ENCODE measurements at regions of chr6 and their contacts with region 1.

Region 1: GRCh38 chr6:138987640-138988468 is at the start of gene REPS1:
- DNase-seq: peak; percentile 90
- H3K4me3 Mint-ChIP-seq: no peak within 1 kb of the TSS
- H3K27ac Mint-ChIP-seq: peak within 1 kb of the TSS; percentile 97
- H3K4me1 Mint-ChIP-seq: no peaks in the 10 kb centered on the region
- H3K27me3 Mint-ChIP-seq: no peaks in the 10 kb centered on the region
- CTCF ChIP-seq: peak; percentile 96
- total RNA-seq, gene REPS1: 54.8 and 65.3 TPM in 2 replicates

Region 2: DNA sequence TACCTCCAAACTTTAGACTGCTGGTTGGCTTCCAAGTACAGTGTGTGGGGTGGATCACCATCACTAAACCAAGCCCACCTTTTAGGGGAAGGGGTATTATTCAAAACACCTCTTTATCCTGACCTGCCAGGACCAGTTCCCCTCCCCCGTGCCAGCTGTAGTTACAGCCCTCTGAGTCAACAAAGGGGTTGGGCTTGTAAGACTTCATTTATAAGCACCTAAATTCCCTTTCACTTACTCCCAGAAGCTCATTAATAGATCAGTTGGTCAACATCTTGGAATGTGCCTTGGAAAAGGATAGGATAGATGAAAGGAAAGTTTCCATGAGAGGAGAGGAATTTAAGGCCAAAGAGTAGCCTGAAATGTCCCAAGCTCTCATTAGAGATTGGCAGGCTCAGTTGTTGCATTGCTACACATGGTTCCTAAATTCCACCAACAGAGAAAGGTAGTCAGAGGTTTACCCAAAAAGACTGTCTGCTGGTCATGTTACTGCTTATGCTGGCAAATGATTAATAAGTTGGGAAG is 1061.6 kb before region 1 on chr6:
- CTCF ChIA-PET with region 1: no interaction called
- POLR2A ChIA-PET with region 1: no interaction called
- intact Hi-C with region 1: no loop called
- DNase-seq: peak; percentile 58
- H3K4me3 Mint-ChIP-seq: no peak overlapping the region
- H3K27ac Mint-ChIP-seq: peak overlapping the region; percentile 23
- H3K4me1 Mint-ChIP-seq: peaks cover 12% of the 10 kb centered on the region
- H3K27me3 Mint-ChIP-seq: no peaks in the 10 kb centered on the region
- CTCF ChIP-seq: no peak

Region 3: DNA sequence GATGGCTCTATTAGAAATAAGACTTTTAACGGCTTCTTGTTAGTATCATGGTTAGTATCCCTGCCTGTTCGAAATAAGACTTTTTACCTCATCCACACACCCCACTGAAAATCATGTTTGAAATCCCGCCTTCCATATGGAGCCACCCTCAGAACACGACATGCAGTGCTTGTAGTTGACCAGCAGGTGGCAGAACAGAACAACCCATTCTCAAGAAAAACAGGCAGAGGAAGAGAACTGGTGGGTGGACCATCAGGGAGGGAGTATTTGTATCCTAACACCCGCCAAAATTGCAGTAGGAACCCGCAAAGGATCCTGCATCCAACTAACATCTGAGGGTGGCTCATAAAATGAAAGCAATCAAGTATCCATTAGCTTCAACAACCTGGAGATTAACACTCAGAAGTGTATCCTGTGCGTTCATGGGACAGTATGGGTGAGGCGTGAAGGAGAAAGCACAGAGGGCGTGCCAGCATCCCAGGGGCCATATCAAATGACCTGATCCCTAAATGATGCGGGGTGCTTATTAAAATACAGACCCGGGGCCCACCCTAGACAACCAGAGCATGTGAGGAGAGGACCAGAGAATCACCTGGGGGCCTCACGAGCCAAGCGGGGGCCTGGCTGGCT is 398.9 kb before region 1 on chr6:
- CTCF ChIA-PET with region 1: no interaction called
- POLR2A ChIA-PET with region 1: no interaction called
- intact Hi-C with region 1: loop called (anchors 10 kb)
- DNase-seq: peak; percentile 84
- H3K4me3 Mint-ChIP-seq: no peak overlapping the region
- H3K27ac Mint-ChIP-seq: no peak overlapping the region
- H3K4me1 Mint-ChIP-seq: peaks cover 31% of the 10 kb centered on the region
- H3K27me3 Mint-ChIP-seq: no peaks in the 10 kb centered on the region
- CTCF ChIP-seq: peak; percentile 82

Region 4: DNA sequence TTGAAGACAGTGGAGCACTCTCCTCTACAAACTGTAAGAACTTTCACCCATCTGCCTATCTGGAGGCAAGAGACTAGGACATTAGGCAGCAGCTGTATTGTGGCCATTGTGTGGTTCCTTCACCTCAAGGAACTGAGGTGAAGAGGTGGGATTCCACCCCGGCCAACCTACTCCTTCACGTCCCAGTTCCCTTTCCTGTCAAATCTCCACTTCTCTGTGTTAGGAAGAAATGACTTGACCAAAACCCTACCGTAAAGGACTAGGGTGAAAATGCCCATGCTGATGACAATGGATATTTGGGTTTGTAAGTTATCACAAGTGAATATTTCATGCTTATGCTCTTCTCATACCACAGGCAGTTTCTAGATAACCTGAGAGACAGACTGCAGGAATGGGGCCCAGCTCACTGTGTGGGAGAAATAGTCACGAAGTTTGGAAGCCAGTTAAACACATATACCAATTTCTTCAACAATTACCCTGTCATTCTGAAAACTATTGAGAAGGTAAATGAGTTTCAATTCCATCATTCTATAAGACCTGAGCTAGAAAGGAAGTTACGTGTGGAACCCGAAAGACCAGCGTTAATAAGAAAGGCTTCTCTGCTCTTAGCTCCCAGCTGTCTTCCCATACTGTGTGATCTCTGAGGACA is 105.4 kb before region 1 on chr6:
- CTCF ChIA-PET with region 1: interaction called, 14 read pairs
- POLR2A ChIA-PET with region 1: interaction called, 23 read pairs
- intact Hi-C with region 1: no loop called
- DNase-seq: no peak
- H3K4me3 Mint-ChIP-seq: no peak overlapping the region
- H3K27ac Mint-ChIP-seq: no peak overlapping the region
- H3K4me1 Mint-ChIP-seq: no peaks in the 10 kb centered on the region
- H3K27me3 Mint-ChIP-seq: no peaks in the 10 kb centered on the region
- CTCF ChIP-seq: no peak

Region 5: GRCh38 chr6:138914701-138915100 is 73.2 kb before region 1 on chr6:
- CTCF ChIA-PET with region 1: no interaction called
- POLR2A ChIA-PET with region 1: interaction called, 4 read pairs
- intact Hi-C with region 1: loop called (anchors 2 kb)
- DNase-seq: no peak
- H3K4me3 Mint-ChIP-seq: no peak overlapping the region
- H3K27ac Mint-ChIP-seq: peak overlapping the region; percentile 13
- H3K4me1 Mint-ChIP-seq: peaks cover 12% of the 10 kb centered on the region
- H3K27me3 Mint-ChIP-seq: no peaks in the 10 kb centered on the region
- CTCF ChIP-seq: no peak

Region 6: DNA sequence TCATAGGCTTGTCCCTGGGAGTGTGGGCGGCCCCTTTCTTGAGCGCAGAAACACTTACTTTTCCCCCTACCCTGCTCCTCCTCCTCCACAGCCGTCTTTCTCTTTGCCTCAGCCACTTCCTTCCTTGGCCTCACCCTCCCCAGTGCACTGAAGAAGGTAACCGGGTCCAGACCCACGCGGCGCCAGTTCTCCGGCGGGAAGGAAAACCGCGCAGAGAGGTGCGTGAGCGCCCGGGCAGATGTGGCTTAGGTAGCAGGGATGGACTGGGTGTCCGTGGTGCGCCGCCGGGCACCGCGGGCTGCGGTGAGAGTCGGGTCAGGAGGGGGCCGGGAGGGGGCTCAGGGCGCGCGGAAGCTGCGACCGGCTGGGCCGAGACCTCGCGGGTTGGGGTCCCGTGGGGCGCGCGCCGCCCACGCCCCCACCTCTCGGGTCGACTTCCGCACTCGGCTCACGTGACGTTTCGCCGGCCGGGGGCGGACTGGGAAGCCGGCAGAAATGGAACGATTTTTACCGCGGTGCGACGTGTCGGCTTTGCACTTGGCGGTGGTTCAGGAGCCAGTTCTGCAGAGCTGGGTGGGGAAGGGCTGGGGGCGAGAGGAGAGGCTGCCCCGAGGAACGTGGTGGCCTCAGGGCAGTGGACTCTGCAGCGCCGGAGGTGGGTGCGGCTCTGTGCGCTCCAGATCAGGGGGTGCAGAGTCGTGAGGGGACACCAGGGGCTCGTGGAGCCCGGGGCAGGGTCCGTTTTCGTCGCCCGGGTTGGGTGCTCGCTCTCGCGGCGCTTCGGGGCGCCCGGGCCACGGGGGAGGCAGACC is 41.0 kb after region 1 on chr6 and contains the start of gene ABRACL:
- CTCF ChIA-PET with region 1: interaction called, 3 read pairs
- POLR2A ChIA-PET with region 1: interaction called, 8 read pairs
- intact Hi-C with region 1: loop called (anchors 5 kb)
- DNase-seq: peak; percentile 26
- H3K4me3 Mint-ChIP-seq: no peak within 1 kb of the TSS
- H3K27ac Mint-ChIP-seq: peak within 1 kb of the TSS; percentile 52
- H3K4me1 Mint-ChIP-seq: peaks cover 24% of the 10 kb centered on the region
- H3K27me3 Mint-ChIP-seq: no peaks in the 10 kb centered on the region
- CTCF ChIP-seq: no peak
- total RNA-seq, gene ABRACL: 24.0 and 36.8 TPM in 2 replicates

Region 7: GRCh38 chr6:139778688-139779087 is 790.8 kb after region 1 on chr6:
- CTCF ChIA-PET with region 1: no interaction called
- POLR2A ChIA-PET with region 1: no interaction called
- intact Hi-C with region 1: no loop called
- DNase-seq: no peak
- H3K4me3 Mint-ChIP-seq: no peak overlapping the region
- H3K27ac Mint-ChIP-seq: no peak overlapping the region
- H3K4me1 Mint-ChIP-seq: no peaks in the 10 kb centered on the region
- H3K27me3 Mint-ChIP-seq: no peaks in the 10 kb centered on the region
- CTCF ChIP-seq: no peak